ENCODE measurements at regions of chr3 and their contacts with region 1.

Region 1: DNA sequence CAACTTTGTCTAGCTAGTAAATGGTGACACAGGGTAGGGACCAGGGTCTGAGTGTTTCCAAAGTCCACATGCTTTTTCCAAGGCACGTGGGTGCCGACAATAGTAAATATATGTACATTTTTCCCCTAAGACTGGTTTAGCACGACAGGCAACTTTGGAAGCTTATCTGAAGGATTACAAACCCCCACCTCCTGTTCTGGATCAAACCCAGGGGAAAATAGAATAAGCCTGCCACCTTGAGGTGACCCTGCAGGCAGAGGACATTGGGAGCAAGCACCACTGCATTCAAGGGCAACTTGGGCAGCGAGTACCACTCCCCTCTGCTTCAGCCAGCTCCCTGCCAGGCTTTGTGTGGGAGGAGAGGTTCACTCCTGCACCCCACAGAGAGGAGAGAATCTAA is 44.8 kb downstream of the KBTBD12 start:
- DNase-seq: no peak
- ATAC-seq: peak; percentile 82
- H3K4me3 ChIP-seq: no peak overlapping the region
- H3K27ac ChIP-seq: no peak overlapping the region
- H3K4me1 ChIP-seq: no peaks in the 10 kb centered on the region
- H3K27me3 ChIP-seq: no peaks in the 10 kb centered on the region
- CTCF ChIP-seq: peak; percentile 44 to 74 (median 49); a peak in 4 of 6 replicates
- EP300 ChIP-seq: no peak
- POLR2A ChIP-seq: no peak
- RAD21 ChIP-seq: peak; percentile 84

Region 2: GRCh38 chr3:127574880-127575878 is 384.7 kb before region 1 on chr3:
- CTCF ChIA-PET with region 1: interaction called, 20 read pairs
- POLR2A ChIA-PET with region 1: no interaction called
- RAD21 ChIA-PET with region 1: interaction called, 15 read pairs
- SMC1A ChIA-PET with region 1: interaction called, 6 read pairs
- in situ Hi-C with region 1: loop called (anchors 5 kb)
- intact Hi-C with region 1: no loop called
- DNase-seq: peak; percentile 69
- ATAC-seq: peak; percentile 98
- H3K4me3 ChIP-seq: no peak overlapping the region
- H3K27ac ChIP-seq: no peak overlapping the region
- H3K4me1 ChIP-seq: no peaks in the 10 kb centered on the region
- H3K27me3 ChIP-seq: no peaks in the 10 kb centered on the region
- CTCF ChIP-seq: peak; percentile 99 to 100 (median 100); a peak in 5 of 6 replicates
- EP300 ChIP-seq: no peak
- POLR2A ChIP-seq: peak; percentile 27
- RAD21 ChIP-seq: peak; percentile 80

Region 3: GRCh38 chr3:127652231-127652995 is 307.4 kb before region 1 on chr3:
- CTCF ChIA-PET with region 1: interaction called, 53 read pairs
- POLR2A ChIA-PET with region 1: no interaction called
- RAD21 ChIA-PET with region 1: interaction called, 30 read pairs
- SMC1A ChIA-PET with region 1: interaction called, 16 read pairs
- in situ Hi-C with region 1: loop called (anchors 5 kb)
- intact Hi-C with region 1: no loop called
- DNase-seq: no peak
- ATAC-seq: peak; percentile 94
- H3K4me3 ChIP-seq: no peak overlapping the region
- H3K27ac ChIP-seq: no peak overlapping the region
- H3K4me1 ChIP-seq: peaks cover 6% of the 10 kb centered on the region; the same call in 1 of the 2 replicates
- H3K27me3 ChIP-seq: no peaks in the 10 kb centered on the region; a peak in 1 of 4 replicates
- CTCF ChIP-seq: peak; percentile 72 to 91 (median 80)
- EP300 ChIP-seq: no peak
- POLR2A ChIP-seq: no peak
- RAD21 ChIP-seq: peak; percentile 97

Region 4: GRCh38 chr3:127735767-127736704 is 223.8 kb before region 1 on chr3:
- CTCF ChIA-PET with region 1: interaction called, 11 read pairs
- POLR2A ChIA-PET with region 1: no interaction called
- RAD21 ChIA-PET with region 1: interaction called, 9 read pairs
- SMC1A ChIA-PET with region 1: interaction called, 4 read pairs
- in situ Hi-C with region 1: no loop called
- intact Hi-C with region 1: no loop called
- DNase-seq: peak; percentile 85
- ATAC-seq: peak; percentile 85
- H3K4me3 ChIP-seq: peak overlapping the region; percentile 77
- H3K27ac ChIP-seq: peak overlapping the region; percentile 97
- H3K4me1 ChIP-seq: peaks cover 31% of the 10 kb centered on the region
- H3K27me3 ChIP-seq: no peaks in the 10 kb centered on the region
- CTCF ChIP-seq: no peak
- EP300 ChIP-seq: peak in 1 of 2 experiments; percentile 71
- POLR2A ChIP-seq: no peak
- RAD21 ChIP-seq: no peak

Region 5: DNA sequence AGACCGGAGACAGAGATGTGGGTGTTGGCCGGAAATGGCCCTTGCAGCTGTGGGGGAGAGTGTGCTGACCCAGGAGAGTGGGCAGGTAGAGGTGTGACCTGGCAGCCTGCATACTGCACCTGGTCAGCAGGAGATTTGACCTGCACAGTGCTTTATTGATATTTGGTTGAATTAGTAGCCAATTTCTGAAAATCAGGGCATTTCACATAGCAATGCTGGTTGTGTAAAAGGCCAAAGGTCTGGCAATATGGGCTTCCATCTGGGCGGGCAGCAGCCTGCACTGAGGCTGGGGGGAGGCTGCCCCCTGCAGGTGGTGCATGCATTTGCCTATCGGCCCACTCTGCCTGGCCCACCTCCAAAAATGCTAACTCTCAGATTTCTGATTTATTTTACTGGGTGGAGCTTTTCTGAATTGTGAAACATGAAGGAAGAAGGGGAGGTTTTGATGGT is 128.1 kb before region 1 on chr3:
- CTCF ChIA-PET with region 1: interaction called, 16 read pairs
- POLR2A ChIA-PET with region 1: interaction called, 3 read pairs
- RAD21 ChIA-PET with region 1: interaction called, 11 read pairs
- SMC1A ChIA-PET with region 1: interaction called, 22 read pairs
- in situ Hi-C with region 1: no loop called
- intact Hi-C with region 1: no loop called
- DNase-seq: no peak
- ATAC-seq: peak; percentile 15; the same call in 1 of the 3 replicates
- H3K4me3 ChIP-seq: no peak overlapping the region
- H3K27ac ChIP-seq: no peak overlapping the region
- H3K4me1 ChIP-seq: peaks cover 37% of the 10 kb centered on the region
- H3K27me3 ChIP-seq: no peaks in the 10 kb centered on the region
- CTCF ChIP-seq: peak; percentile 37 to 64 (median 58)
- EP300 ChIP-seq: no peak
- POLR2A ChIP-seq: no peak
- RAD21 ChIP-seq: peak; percentile 73

Region 6: GRCh38 chr3:127949446-127950055 is 10.3 kb before region 1 on chr3:
- CTCF ChIA-PET with region 1: interaction called, 16 read pairs
- POLR2A ChIA-PET with region 1: no interaction called
- RAD21 ChIA-PET with region 1: interaction called, 3 read pairs
- SMC1A ChIA-PET with region 1: interaction called, 5 read pairs
- in situ Hi-C with region 1: no loop called
- intact Hi-C with region 1: no loop called
- DNase-seq: no peak
- ATAC-seq: no peak
- H3K4me3 ChIP-seq: no peak overlapping the region
- H3K27ac ChIP-seq: no peak overlapping the region
- H3K4me1 ChIP-seq: no peaks in the 10 kb centered on the region
- H3K27me3 ChIP-seq: 0 out of 4 replicates have a peak, but pooled peaks cover 0 to 1% of the 10 kb centered on the region in 2 experiments
- CTCF ChIP-seq: no peak
- EP300 ChIP-seq: no peak
- POLR2A ChIP-seq: no peak
- RAD21 ChIP-seq: no peak

Region 7: GRCh38 chr3:128252083-128252482 is 292.2 kb after region 1 on chr3:
- CTCF ChIA-PET with region 1: no interaction called
- POLR2A ChIA-PET with region 1: no interaction called
- RAD21 ChIA-PET with region 1: no interaction called
- SMC1A ChIA-PET with region 1: no interaction called
- in situ Hi-C with region 1: no loop called
- intact Hi-C with region 1: no loop called
- DNase-seq: no peak
- ATAC-seq: no peak
- H3K4me3 ChIP-seq: no peak overlapping the region
- H3K27ac ChIP-seq: no peak overlapping the region
- H3K4me1 ChIP-seq: no peaks in the 10 kb centered on the region
- H3K27me3 ChIP-seq: no peaks in the 10 kb centered on the region
- CTCF ChIP-seq: no peak
- EP300 ChIP-seq: no peak
- POLR2A ChIP-seq: no peak
- RAD21 ChIP-seq: no peak

Measured in GM12878 (cell line).